PC-3 (cell line): ENCODE measurements at regions of chr2 and their contacts with region 1.

Region 1: DNA sequence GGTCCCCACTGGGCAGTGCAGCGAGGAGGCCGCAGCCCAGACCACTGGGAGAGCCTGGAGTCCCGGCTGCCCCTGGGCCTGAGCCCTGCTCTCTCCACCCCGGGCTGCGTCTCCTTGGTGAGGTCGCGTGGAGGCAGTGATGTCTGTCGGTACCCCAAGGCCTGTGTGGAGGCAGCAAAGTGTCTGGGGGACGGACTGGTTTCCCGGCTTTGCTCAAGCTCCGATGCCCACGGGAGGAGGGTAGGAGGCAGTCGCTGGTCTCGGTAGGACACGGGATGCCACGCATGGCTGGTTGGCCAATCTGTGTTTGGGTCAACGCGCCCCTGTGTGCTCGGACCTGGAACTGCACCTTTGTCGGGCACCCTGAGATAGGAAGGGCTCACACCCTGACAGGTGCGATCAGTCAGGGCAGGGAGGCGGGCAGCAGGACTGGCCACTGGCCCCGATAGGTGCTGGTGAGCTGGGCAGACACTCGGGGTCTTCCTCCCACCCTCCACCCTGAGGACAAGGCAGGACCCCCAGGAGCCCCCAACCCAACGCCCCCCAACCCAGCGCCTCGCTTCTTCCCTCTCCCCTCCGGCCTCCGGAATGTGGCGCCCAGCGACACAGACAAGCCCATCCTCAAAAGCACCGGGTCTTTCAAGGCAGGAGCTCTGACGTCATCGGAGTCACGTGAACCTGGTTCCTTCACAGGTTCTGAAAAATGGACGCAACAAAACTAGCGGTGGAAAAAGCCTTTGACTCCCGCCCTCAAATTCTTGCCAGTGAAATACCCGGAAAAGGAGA is 288.6 kb downstream of the NDUFA10 start:
- DNase-seq: no peak
- ATAC-seq: no peak
- H3K4me3 ChIP-seq: no peak overlapping the region
- H3K27ac ChIP-seq: no peak overlapping the region
- H3K4me1 ChIP-seq: no peaks in the 10 kb centered on the region
- H3K27me3 ChIP-seq: peaks cover 34% of the 10 kb centered on the region
- CTCF ChIP-seq: no peak

Region 2: GRCh38 chr2:239303711-239304532 is 432.6 kb before region 1 on chr2:
- CTCF ChIA-PET with region 1: no interaction called
- POLR2A ChIA-PET with region 1: no interaction called
- intact Hi-C with region 1: no loop called
- DNase-seq: no peak
- ATAC-seq: no peak
- H3K4me3 ChIP-seq: no peak overlapping the region
- H3K27ac ChIP-seq: no peak overlapping the region
- H3K4me1 ChIP-seq: no peaks in the 10 kb centered on the region
- H3K27me3 ChIP-seq: no peaks in the 10 kb centered on the region
- CTCF ChIP-seq: no peak

Region 3: DNA sequence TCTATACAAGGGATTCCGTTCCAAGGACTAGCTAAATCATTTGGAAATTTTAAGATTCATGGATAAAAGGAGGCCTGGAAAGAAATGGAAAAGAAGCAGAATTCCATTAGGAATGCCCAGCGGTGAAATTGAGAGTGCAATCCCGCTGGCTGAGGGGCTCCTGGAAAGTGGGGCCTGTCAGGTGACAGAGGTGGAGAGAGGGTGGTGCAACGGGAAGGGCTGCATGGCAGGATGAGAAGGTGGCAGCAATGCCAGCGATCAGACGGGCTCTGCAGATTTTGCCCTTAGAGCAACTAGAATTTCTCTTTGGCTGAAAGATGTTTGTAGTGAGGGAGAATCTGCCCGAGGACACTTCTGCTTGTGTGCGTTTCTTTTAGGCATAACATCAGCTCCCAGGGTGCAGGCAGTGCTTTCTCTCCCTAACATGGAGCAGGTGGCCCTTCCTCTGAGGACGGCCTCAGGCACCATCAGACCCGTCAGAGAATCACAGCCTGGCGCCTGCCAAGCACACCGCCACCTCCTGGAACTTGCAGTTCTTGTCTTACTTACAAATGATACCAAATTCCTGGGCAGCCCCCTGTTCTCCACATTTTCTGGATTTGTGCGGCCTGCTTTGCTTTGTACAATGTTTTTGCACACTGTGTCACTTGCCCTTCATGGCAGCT is 27.0 kb after region 1 on chr2:
- CTCF ChIA-PET with region 1: no interaction called
- POLR2A ChIA-PET with region 1: no interaction called
- intact Hi-C with region 1: no loop called
- DNase-seq: peak; percentile 29
- ATAC-seq: 0 out of 2 replicates have a peak, but pooled peaks have one; percentile 45
- H3K4me3 ChIP-seq: no peak overlapping the region
- H3K27ac ChIP-seq: no peak overlapping the region
- H3K4me1 ChIP-seq: peaks cover 6% of the 10 kb centered on the region; the same call in 1 of the 2 replicates
- H3K27me3 ChIP-seq: peaks cover 89% of the 10 kb centered on the region
- CTCF ChIP-seq: peak; percentile 51

Region 4: DNA sequence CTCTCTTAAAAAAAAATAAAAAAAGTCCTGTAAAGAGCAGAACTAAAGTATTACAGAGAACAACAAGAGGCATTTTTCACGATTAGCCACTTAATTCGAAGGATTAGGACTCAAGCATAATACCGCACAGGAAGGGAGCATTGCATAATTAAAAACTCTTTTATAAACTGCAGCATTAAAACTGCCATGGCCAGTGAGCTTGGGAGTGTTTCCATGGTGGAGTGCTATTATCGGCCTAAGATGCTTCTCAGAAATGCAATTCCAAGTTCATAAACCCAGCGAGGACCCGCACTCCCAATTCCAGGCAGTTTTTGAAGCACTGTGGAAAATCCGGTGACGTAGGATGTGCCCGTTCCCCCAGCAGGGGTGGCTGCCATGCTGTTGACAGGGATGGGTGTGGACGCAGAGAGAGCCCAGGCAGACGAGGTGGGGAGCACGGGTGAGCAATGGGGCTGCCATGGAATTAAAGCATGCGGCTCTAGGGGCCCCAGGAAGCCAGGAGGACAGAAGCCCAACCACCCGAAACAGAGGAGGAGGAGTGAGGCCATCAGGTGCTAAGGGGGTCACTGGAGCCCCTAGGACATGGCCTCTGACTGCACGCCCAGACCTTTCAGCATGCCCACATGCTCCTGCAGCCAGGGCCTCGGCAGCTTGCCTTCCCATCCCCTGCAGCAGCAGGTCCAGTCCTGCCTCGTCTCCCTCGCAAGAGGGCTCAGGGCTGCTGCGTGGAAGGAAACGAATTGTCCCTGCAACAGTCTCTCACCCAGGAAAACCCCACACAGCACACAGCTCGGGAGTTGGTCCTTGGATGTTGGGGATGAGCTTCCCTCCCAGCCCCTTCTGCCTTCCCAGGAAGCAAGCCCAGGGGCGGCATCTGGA is 55.2 kb after region 1 on chr2:
- CTCF ChIA-PET with region 1: no interaction called
- POLR2A ChIA-PET with region 1: no interaction called
- intact Hi-C with region 1: no loop called
- DNase-seq: no peak
- ATAC-seq: no peak
- H3K4me3 ChIP-seq: no peak overlapping the region
- H3K27ac ChIP-seq: no peak overlapping the region
- H3K4me1 ChIP-seq: no peaks in the 10 kb centered on the region
- H3K27me3 ChIP-seq: peaks cover 64% of the 10 kb centered on the region; the same call in 1 of the 2 replicates
- CTCF ChIP-seq: no peak

Region 5: DNA sequence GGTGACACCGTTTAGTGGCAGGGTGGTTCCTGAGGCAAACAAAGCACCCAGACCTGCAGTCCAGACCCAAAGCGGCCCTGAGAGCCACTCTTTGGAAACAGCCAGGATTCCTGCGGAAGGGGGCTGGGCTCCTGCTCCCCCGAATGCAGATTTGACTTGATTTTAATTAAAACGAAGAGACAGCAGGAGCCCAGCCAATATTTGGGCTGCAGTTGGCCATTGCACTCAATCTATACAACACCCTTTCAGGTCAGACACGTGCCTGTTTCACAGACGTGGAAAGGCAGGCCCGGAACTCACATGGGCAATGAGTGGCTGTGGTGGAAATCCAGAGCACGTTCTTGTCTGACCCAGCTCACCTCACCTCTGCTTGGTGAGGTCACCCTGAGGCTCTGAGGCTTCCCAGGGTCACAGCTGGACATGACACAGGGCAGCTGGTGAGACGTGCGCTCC is 166.2 kb after region 1 on chr2:
- CTCF ChIA-PET with region 1: interaction called, 19 read pairs
- POLR2A ChIA-PET with region 1: no interaction called
- intact Hi-C with region 1: no loop called
- DNase-seq: no peak
- ATAC-seq: no peak
- H3K4me3 ChIP-seq: no peak overlapping the region
- H3K27ac ChIP-seq: no peak overlapping the region
- H3K4me1 ChIP-seq: no peaks in the 10 kb centered on the region
- H3K27me3 ChIP-seq: no peaks in the 10 kb centered on the region
- CTCF ChIP-seq: no peak